Sigmoid colon (tissue), 7 donors: ENCODE measurements at regions of chr3 and their contacts with region 1.

Region 1: GRCh38 chr3:112990672-112991602 is at the start of gene GTPBP8:
- DNase-seq: peak; percentile 96
- H3K4me3 ChIP-seq: peak within 1 kb of the TSS; percentile 81 to 94 (median 88)
- H3K27ac ChIP-seq: peak within 1 kb of the TSS; percentile 95 to 96 (median 95)
- H3K4me1 ChIP-seq: peaks cover 0 to 20% (median 15%) of the 10 kb centered on the region in 4 donors
- H3K27me3 ChIP-seq: no peaks in the 10 kb centered on the region
- CTCF ChIP-seq: no peak
- EP300 ChIP-seq: peak in 1 of 4 donors; percentile 4
- POLR2A ChIP-seq: peak; percentile 93 to 94
- total RNA-seq, gene GTPBP8: 20.4 to 38.2 (median 32.8) TPM

Region 2: DNA sequence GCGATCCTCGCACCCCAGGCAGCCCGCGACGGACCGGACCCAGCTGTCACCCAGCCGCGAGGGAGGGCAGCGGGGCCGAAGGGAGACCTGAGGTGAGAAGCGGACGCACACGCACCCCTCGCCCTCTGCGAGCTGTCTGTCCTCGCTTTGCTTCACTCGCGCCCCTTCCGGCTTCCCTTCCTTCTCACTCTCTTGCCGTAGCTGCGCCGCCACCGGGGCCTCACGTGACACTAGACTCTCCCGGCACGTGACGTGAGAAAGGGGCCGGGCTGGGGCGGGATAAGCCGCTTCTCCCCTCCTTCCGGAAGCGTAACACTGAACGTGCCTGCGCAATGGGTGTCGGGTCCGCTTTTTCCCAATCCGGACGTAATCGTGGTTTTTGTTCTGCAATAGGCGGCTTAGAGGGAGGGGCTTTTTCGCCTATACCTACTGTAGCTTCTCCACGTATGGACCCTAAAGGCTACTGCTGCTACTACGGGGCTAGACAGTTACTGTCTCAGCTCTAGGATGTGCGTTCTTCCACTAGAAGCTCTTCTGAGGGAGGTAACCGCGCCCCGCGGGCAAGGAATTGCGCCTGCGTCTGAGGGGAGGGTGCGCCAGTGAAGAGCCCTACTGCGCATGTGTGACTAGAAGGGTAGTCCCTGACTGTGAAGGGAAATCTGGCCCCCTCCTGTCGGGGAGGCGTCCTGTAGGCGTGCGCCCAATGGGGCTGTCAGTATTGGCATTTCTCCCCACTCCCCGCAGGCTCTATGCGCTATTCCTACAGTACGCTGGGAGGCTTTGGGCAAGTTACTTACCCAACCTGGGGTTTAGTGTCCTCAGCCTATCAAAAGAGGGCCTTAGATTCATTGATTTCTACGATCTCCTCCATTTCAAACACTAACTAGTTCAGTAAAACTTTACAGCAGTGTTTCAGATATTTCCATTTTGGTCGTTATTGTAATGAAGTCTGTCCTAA is 428.9 kb before region 1 on chr3 and contains the starts of genes ATG3 and SLC35A5:
- intact Hi-C with region 1: loop called (anchors 5 kb)
- DNase-seq: peak; percentile 99
- H3K4me3 ChIP-seq: peak within 1 kb of the TSS; percentile 68 to 98 (median 88)
- H3K27ac ChIP-seq: peak within 1 kb of the TSS; percentile 94 to 98 (median 97)
- H3K4me1 ChIP-seq: peaks cover 0 to 37% (median 27%) of the 10 kb centered on the region in 4 donors
- H3K27me3 ChIP-seq: no peaks in the 10 kb centered on the region
- CTCF ChIP-seq: no peak
- EP300 ChIP-seq: peak in 1 of 4 donors; percentile 70
- POLR2A ChIP-seq: peak; percentile 67 to 79
- total RNA-seq, gene ATG3: 28.0 to 49.5 (median 41.1) TPM
- total RNA-seq, gene SLC35A5: 16.1 to 32.1 (median 17.5) TPM

Region 3: GRCh38 chr3:112794622-112795172 is 196.2 kb before region 1 on chr3:
- intact Hi-C with region 1: no loop called
- DNase-seq: no peak
- H3K4me3 ChIP-seq: no peak overlapping the region
- H3K27ac ChIP-seq: peak overlapping the region in 1 of 4 donors; percentile 3
- H3K4me1 ChIP-seq: no peaks in the 10 kb centered on the region
- H3K27me3 ChIP-seq: no peaks in the 10 kb centered on the region
- CTCF ChIP-seq: no peak
- EP300 ChIP-seq: no peak
- POLR2A ChIP-seq: no peak